ENCODE measurements at regions of chr1 and their contacts with region 1.

Region 1: GRCh38 chr1:153805042-153805745 is 30.0 kb downstream of the SLC27A3 start:
- DNase-seq: no peak
- ATAC-seq: peak; percentile 98
- H3K4me3 Mint-ChIP-seq: peak overlapping the region; percentile 42
- H3K27ac Mint-ChIP-seq: peak overlapping the region; percentile 83
- H3K4me1 Mint-ChIP-seq: peaks cover 34% of the 10 kb centered on the region
- H3K27me3 Mint-ChIP-seq: no peaks in the 10 kb centered on the region
- CTCF ChIP-seq: no peak

Region 2: DNA sequence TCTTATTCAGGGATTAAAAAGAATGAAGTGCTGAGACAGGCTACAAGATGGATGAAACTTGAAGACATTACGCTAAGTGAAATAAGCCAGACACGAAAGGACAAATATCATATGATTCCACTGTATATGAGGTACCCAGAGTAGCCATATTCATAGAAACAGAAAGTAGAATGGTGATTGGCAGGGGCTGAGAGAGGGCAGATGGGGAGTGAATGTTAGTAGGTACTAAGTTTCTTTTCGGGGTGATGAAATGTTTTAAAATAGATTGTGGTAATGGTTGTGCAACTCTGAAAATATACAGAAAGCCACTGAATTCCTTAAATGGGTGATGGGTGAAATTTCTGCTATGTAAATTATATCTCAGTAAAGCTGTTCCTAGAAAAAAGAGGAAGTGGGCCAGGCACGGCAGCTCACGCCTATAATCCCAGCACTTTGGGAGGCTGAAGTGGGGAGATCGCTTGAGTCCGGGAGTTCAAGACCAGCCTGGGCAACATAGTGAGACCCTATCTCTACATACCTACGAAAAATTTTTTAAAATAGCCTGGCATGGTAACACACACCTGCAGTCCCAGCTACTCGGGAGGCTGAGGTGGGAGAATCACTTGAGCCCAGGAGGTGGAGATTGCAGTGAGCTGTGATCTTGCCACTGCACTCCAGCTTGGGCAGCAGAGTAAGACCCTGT is 14.1 kb before region 1 on chr1:
- CTCF ChIA-PET with region 1: no interaction called
- POLR2A ChIA-PET with region 1: interaction called, 4 read pairs
- intact Hi-C with region 1: loop called (anchors 2 kb)
- DNase-seq: no peak
- ATAC-seq: peak; percentile 92
- H3K4me3 Mint-ChIP-seq: peak overlapping the region; percentile 71
- H3K27ac Mint-ChIP-seq: peak overlapping the region; percentile 96
- H3K4me1 Mint-ChIP-seq: peaks cover 45% of the 10 kb centered on the region
- H3K27me3 Mint-ChIP-seq: no peaks in the 10 kb centered on the region
- CTCF ChIP-seq: no peak

Region 3: DNA sequence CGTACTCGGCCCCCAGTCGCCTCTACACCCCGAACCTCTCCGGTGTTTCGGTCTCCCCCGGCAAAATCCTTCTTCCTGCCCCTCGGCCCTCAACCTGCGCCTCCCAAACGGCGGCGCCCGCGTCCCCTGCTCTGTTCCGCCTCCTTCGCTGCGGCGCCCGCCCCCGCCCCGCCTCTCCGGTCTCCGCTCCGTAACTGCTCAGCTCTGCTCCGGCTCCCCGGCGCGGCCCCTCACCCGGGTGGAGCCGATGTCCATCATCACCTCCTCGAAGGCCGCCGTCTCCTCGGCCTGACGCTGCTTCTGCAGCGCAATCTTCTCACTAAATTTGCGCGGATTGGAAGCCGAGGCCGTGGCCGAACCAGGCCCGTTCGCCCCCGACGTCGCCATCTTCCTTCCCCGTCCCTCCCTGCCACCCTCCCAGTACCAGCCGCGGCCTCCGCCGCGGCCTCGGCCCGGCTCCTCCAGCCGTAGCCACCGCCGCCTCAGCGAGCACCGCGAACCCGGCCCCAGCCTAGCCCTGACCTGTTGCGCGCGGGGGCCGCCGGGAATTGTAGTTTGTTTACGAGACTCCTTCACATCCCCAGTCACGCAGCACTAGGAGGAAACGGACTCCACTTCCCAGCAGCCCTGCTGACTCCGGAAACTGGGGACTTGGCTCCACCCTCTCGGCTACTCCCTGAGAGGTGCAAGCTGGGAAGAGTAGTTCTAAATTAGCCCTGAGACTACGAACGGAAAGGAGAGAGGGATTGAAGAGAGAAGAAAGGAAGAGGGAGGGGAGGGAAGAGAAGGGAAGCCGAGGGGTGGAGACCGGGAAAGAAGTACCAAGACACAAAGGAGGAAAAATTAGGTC is 153.1 kb after region 1 on chr1 and contains the start of gene CRTC2:
- CTCF ChIA-PET with region 1: no interaction called
- POLR2A ChIA-PET with region 1: interaction called, 3 read pairs
- intact Hi-C with region 1: loop called (anchors 1 kb)
- DNase-seq: peak; percentile 92
- ATAC-seq: peak; percentile 83
- H3K4me3 Mint-ChIP-seq: peak within 1 kb of the TSS; percentile 96
- H3K27ac Mint-ChIP-seq: peak within 1 kb of the TSS; percentile 96
- H3K4me1 Mint-ChIP-seq: peaks cover 77% of the 10 kb centered on the region
- H3K27me3 Mint-ChIP-seq: no peaks in the 10 kb centered on the region
- CTCF ChIP-seq: no peak
- total RNA-seq, gene CRTC2: 206 and 247 TPM in 2 replicates

Measured in activated B cell treated with CpG ODN at 0.5 μM for 24 hours (primary cell).